PC-3 (cell line): ENCODE measurements at regions of chr3 and their contacts with region 1.

Region 1: DNA sequence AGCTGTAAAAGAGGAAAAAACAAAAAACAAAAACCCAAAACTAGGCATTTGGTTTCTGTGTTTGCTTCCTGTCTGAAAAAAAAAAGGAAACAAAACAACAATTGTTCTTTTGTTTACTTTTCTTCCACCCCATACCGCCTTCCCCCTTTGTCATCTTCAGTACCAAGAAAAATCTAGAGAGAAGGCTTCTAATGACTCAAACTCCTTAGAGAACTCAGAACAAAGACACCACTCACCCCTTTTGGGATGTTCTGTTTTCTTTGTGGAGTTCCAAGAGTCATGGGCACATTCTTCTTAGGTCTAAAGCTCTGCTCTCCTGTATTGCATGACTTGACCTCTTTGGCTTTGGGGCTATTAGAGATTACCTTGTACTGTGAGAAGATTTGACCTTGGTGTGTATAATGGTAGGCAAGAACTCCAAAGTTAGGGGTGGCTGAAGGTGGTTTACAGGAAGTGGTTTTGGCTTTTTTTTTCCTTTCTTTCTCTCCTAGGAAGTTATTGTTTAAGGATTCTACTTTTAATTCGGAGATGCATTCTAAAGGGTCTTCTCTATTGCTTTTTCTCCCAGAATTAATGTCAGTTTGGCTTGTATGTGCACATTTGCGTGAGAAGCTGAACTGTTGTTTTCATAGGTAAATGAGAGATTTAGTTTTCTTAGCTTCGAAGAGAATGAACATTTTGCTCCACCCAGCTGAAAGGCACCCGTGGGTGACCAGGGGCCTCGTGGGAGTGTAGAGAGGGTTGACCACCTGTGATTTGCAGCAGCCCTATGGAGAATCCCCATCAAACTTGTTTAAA is 39.5 kb upstream of the ZBTB20 start:
- DNase-seq: no peak
- ATAC-seq: no peak
- H3K4me3 ChIP-seq: no peak overlapping the region
- H3K27ac ChIP-seq: no peak overlapping the region
- H3K4me1 ChIP-seq: no peaks in the 10 kb centered on the region
- H3K27me3 ChIP-seq: no peaks in the 10 kb centered on the region
- CTCF ChIP-seq: no peak

Region 2: DNA sequence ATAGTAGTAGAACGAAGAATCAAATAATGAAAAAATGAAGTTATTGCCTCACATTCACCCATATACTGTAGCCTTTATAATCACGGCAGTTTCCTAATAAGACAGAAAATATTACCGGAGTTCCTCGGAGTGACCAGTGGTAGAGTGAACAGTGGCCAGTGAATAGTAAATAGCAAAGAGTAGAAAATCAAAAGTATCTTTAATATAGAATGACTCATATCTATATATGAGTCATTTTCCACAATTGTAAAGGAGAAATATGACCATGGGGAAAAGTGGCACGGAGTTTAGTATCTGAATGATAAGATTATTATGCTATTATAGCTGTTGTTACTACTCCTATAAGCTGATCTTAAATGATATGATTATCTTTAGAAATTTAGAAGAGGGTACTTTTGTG is 77.9 kb before region 1 on chr3:
- CTCF ChIA-PET with region 1: no interaction called
- POLR2A ChIA-PET with region 1: no interaction called
- intact Hi-C with region 1: loop called (anchors 2 kb)
- DNase-seq: peak; percentile 27
- ATAC-seq: peak; percentile 99
- H3K4me3 ChIP-seq: no peak overlapping the region
- H3K27ac ChIP-seq: no peak overlapping the region
- H3K4me1 ChIP-seq: peaks cover 5% of the 10 kb centered on the region
- H3K27me3 ChIP-seq: no peaks in the 10 kb centered on the region
- CTCF ChIP-seq: no peak

Region 3: GRCh38 chr3:115134648-115135347 is 51.8 kb before region 1 on chr3:
- CTCF ChIA-PET with region 1: no interaction called
- POLR2A ChIA-PET with region 1: no interaction called
- intact Hi-C with region 1: no loop called
- DNase-seq: no peak
- ATAC-seq: no peak
- H3K4me3 ChIP-seq: no peak overlapping the region
- H3K27ac ChIP-seq: no peak overlapping the region
- H3K4me1 ChIP-seq: no peaks in the 10 kb centered on the region
- H3K27me3 ChIP-seq: no peaks in the 10 kb centered on the region
- CTCF ChIP-seq: no peak

Region 4: GRCh38 chr3:115279939-115280338 is 93.4 kb after region 1 on chr3:
- CTCF ChIA-PET with region 1: no interaction called
- POLR2A ChIA-PET with region 1: no interaction called
- intact Hi-C with region 1: no loop called
- DNase-seq: no peak
- ATAC-seq: no peak
- H3K4me3 ChIP-seq: no peak overlapping the region
- H3K27ac ChIP-seq: no peak overlapping the region
- H3K4me1 ChIP-seq: no peaks in the 10 kb centered on the region
- H3K27me3 ChIP-seq: no peaks in the 10 kb centered on the region; the same call in 1 of the 2 replicates
- CTCF ChIP-seq: no peak

Region 5: GRCh38 chr3:115658337-115659181 is 472.0 kb after region 1 on chr3:
- CTCF ChIA-PET with region 1: no interaction called
- POLR2A ChIA-PET with region 1: no interaction called
- intact Hi-C with region 1: no loop called
- DNase-seq: peak; percentile 66
- ATAC-seq: peak; percentile 90
- H3K4me3 ChIP-seq: peak overlapping the region; percentile 80
- H3K27ac ChIP-seq: no peak overlapping the region
- H3K4me1 ChIP-seq: peaks cover 5% of the 10 kb centered on the region
- H3K27me3 ChIP-seq: peaks cover 37% of the 10 kb centered on the region
- CTCF ChIP-seq: no peak